T-cell (primary cell): ENCODE measurements at regions of chr14 and their contacts with region 1.

Region 1: DNA sequence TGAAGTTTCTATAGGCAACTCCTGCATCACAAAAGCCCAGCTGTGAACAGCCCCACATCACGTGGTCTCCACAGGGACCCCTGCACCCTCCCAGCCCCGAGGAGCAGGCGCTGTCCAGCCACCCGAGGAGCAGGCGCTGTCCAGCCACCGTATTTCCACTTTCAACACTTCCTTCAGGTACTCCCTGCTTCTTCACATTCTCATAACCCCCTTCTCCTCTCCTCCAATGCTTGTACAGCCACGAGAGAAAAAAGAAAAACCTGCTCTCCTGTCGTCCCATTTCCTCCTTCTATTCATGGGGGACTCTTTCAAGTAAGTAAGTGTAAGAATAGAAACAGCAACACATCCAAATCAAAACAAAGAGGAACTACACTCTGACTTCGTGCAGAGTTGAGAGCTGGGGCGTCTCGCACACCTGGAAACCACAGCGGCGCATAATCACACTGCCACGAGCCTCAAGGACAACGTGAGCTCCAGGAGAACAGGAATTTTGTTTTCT is 11.9 kb downstream of the CDC42BPB start:
- DNase-seq: no peak
- ATAC-seq: no peak
- H3K4me3 ChIP-seq: no peak overlapping the region
- H3K4me3 Mint-ChIP-seq: peak overlapping the region in 1 of 3 donors; percentile 4
- H3K27ac ChIP-seq: no peak overlapping the region
- H3K27ac Mint-ChIP-seq: no peak overlapping the region
- H3K4me1 ChIP-seq: peaks cover 0 to 5% of the 10 kb centered on the region in 2 experiments
- H3K4me1 Mint-ChIP-seq: peaks cover 7 to 10% (median 7%) of the 10 kb centered on the region in 3 donors
- H3K27me3 ChIP-seq: peaks cover 0 to 23% of the 10 kb centered on the region in 2 experiments
- H3K27me3 Mint-ChIP-seq: peaks cover 10 to 12% of the 10 kb centered on the region in 2 donors

Region 2: DNA sequence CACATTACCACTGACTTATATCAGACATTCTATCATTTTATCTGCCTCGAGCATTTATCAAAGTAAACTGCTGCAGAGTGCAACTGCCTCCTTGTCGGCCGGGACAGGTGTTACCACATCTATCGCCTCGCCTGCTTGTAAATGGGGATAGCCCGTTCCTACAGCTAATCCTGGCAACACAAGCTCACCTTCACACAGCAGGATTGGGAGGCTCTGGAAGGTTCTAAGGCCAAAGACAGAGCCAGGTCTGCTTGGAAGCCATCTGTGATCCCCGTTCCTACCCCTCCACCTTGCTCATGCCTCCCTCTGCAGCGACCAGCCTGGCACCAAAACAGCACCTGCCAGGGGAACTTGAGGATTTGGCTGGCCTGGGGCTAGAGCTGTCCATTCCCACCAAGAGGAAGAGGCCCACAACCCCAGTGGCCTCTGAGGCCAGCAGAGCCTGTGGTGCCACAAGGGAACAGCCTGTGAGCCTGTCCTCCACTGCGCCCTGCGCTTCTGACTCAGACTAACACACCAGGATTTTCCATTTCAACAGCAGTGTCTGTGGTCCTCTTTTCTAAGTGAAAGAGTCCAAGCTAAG is 1598.9 kb before region 1 on chr14:
- CTCF ChIA-PET with region 1: no interaction called
- POLR2A ChIA-PET with region 1: interaction called in 1 of 2 experiments, 12 read pairs
- DNase-seq: no peak
- ATAC-seq: no peak
- H3K4me3 ChIP-seq: no peak overlapping the region
- H3K4me3 Mint-ChIP-seq: peak overlapping the region in 1 of 3 donors; percentile 17
- H3K27ac ChIP-seq: no peak overlapping the region
- H3K27ac Mint-ChIP-seq: no peak overlapping the region
- H3K4me1 ChIP-seq: peaks cover 7 to 38% of the 10 kb centered on the region in 2 experiments
- H3K4me1 Mint-ChIP-seq: peaks cover 37 to 43% (median 40%) of the 10 kb centered on the region in 3 donors
- H3K27me3 ChIP-seq: peaks cover 3 to 58% of the 10 kb centered on the region in 2 experiments
- H3K27me3 Mint-ChIP-seq: peaks cover 62 to 77% of the 10 kb centered on the region in 2 donors